PC-9 (cell line): ENCODE measurements at regions of chr3 and their contacts with region 1.

Region 1: DNA sequence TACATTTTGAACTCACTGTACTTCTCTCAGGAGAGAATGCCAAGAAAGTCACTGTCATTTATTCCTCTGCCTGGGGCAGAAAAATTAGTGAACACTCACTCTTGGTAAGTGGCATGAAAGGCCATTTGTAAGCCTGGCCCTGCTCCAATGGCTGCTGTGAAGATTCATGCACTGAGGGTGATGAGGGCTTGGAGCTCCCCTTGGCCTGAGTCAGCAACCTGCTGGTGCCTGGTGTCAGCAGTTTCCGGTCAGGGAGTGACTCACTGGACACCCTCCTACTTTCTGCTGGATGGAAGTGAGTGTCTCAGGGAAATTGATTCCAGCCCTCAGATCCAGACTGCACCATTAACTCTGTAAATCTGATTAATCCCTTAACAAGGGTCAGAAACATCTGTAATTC is 37.6 kb downstream of the TRA2B start:
- DNase-seq: peak; percentile 89 to 97
- H3K4me3 ChIP-seq: no peak overlapping the region
- H3K27ac ChIP-seq: peak overlapping the region; percentile 62
- H3K4me1 ChIP-seq: peaks cover 14% of the 10 kb centered on the region
- H3K27me3 ChIP-seq: no peaks in the 10 kb centered on the region
- CTCF ChIP-seq: no peak

Region 2: GRCh38 chr3:185460719-185461350 is 439.4 kb before region 1 on chr3:
- CTCF ChIA-PET with region 1: interaction called, 25 read pairs
- POLR2A ChIA-PET with region 1: no interaction called
- intact Hi-C with region 1: no loop called
- DNase-seq: no peak
- H3K4me3 ChIP-seq: no peak overlapping the region
- H3K27ac ChIP-seq: no peak overlapping the region
- H3K4me1 ChIP-seq: no peaks in the 10 kb centered on the region
- H3K27me3 ChIP-seq: no peaks in the 10 kb centered on the region
- CTCF ChIP-seq: peak; percentile 87

Region 3: DNA sequence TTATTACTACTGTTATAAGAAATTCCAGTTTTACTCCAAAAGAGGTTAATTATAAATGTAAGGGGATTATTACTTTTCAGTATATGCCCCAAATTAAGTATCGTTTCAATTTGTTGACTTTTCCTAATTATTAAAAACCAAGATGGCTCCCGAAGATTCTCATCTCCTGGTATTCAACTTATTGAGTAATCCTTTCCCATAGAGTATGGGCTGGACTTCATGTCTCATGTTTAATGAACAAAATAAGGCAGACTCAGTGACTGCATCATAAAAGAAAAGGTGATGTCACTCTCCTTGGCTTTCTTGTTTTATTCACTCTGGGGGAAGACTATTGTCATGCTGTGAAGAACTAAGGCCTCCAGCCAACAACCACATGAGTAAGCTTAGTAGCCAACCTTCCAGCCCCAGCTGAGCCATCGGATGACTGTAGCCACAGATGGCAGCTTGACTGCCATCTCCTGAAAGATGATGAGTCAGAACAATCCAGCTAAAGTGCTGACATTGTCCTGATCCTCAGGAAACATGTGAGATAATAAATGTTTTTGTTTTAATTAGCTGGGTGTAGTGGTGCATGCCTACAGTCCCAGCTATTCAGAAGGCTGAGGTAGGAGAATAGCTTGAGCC is 92.7 kb before region 1 on chr3:
- CTCF ChIA-PET with region 1: no interaction called
- POLR2A ChIA-PET with region 1: no interaction called
- intact Hi-C with region 1: no loop called
- DNase-seq: peak in 1 of 2 experiments; percentile 60
- H3K4me3 ChIP-seq: no peak overlapping the region
- H3K27ac ChIP-seq: no peak overlapping the region
- H3K4me1 ChIP-seq: no peaks in the 10 kb centered on the region; the same call in 1 of the 2 replicates
- H3K27me3 ChIP-seq: no peaks in the 10 kb centered on the region
- CTCF ChIP-seq: no peak

Region 4: DNA sequence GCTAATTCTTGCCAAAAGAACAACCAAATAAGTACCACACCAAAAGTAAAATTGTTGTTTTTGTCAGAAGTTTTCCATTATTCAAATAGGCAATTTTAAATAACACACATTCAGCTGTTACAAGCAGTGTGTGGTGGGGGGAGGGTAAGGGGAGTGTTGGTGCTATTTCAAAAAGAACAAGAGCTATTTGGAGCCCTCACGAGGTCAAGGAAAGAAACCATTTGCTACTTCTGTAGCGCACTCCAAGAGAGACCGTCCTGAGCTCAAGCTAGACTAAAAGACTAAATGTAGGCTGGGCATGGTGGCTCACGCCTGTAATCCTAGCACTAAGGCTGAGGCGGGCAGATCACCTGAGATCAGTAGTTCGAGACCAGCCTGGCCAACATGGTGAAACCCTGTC is 54.2 kb before region 1 on chr3:
- CTCF ChIA-PET with region 1: interaction called, 11 read pairs
- POLR2A ChIA-PET with region 1: no interaction called
- intact Hi-C with region 1: no loop called
- DNase-seq: no peak
- H3K4me3 ChIP-seq: no peak overlapping the region
- H3K27ac ChIP-seq: no peak overlapping the region
- H3K4me1 ChIP-seq: peaks cover 5% of the 10 kb centered on the region
- H3K27me3 ChIP-seq: no peaks in the 10 kb centered on the region
- CTCF ChIP-seq: no peak

Region 5: DNA sequence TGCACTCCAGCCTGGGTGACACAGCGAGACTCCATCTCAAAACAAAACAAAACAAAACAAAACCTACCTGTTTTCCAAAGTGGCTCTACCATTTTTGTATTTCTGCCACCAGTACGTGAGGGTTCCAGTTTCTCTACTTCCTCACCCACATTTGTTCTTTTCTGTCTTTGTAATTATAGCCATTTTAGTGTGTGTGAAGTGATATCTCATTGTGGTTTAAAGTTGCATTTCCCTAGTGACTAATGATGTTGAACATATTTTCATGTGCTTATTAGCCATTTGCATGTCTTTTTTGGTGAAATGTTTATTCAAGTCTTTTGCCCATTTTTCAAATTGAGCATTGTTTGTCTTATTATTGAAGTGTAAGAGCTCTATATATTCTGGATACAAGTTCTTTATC is 13.2 kb before region 1 on chr3:
- CTCF ChIA-PET with region 1: no interaction called
- POLR2A ChIA-PET with region 1: interaction called, 29 read pairs
- intact Hi-C with region 1: no loop called
- DNase-seq: no peak
- H3K4me3 ChIP-seq: no peak overlapping the region
- H3K27ac ChIP-seq: no peak overlapping the region
- H3K4me1 ChIP-seq: no peaks in the 10 kb centered on the region
- H3K27me3 ChIP-seq: no peaks in the 10 kb centered on the region
- CTCF ChIP-seq: no peak

Region 6: DNA sequence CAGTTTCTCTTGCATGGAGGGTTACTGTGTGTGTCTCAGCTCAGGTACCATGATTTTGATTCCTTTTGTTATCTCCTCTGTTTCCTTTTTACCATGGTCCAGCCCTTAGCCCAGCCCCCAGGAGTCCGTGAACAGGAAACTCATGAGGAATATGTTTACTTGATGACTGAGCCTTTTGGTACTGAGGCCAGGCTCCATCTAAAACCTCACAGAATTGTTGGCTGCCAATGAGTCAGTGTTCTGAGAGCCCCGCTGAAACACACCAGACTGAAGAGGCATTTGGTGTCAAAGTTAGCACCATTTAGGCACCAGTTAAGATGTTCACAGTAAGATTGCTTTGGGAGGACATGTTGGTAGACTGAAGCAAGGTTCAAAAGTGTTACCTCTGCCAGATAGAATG is 380.9 kb after region 1 on chr3:
- CTCF ChIA-PET with region 1: no interaction called
- POLR2A ChIA-PET with region 1: no interaction called
- intact Hi-C with region 1: no loop called
- DNase-seq: no peak
- H3K4me3 ChIP-seq: no peak overlapping the region
- H3K27ac ChIP-seq: no peak overlapping the region
- H3K4me1 ChIP-seq: no peaks in the 10 kb centered on the region
- H3K27me3 ChIP-seq: peaks cover 88% of the 10 kb centered on the region
- CTCF ChIP-seq: no peak

Region 7: DNA sequence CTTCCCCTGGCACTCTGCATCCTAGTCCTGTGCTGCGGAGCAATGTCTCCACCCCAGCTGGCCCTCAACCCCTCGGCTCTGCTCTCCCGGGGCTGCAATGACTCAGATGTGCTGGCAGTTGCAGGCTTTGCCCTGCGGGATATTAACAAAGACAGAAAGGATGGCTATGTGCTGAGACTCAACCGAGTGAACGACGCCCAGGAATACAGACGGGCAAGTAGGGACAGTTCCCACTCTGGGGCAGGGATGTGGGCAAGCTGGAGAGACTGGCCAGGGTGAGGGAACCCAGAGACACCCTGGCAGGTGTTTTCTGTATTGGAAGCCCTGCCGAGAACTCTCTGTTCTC is 740.2 kb after region 1 on chr3:
- CTCF ChIA-PET with region 1: no interaction called
- POLR2A ChIA-PET with region 1: no interaction called
- intact Hi-C with region 1: no loop called
- DNase-seq: peak; percentile 67 to 70
- H3K4me3 ChIP-seq: no peak overlapping the region
- H3K27ac ChIP-seq: no peak overlapping the region
- H3K4me1 ChIP-seq: peaks cover 26% of the 10 kb centered on the region
- H3K27me3 ChIP-seq: no peaks in the 10 kb centered on the region
- CTCF ChIP-seq: no peak